PC-3 (cell line): ENCODE measurements at regions of chr2 and their contacts with region 1.

Region 1: GRCh38 chr2:61789807-61790602 is 63.9 kb downstream of the FAM161A start:
- DNase-seq: peak; percentile 64
- ATAC-seq: no peak
- H3K4me3 ChIP-seq: no peak overlapping the region
- H3K27ac ChIP-seq: no peak overlapping the region
- H3K4me1 ChIP-seq: peaks cover 7% of the 10 kb centered on the region
- H3K27me3 ChIP-seq: no peaks in the 10 kb centered on the region
- CTCF ChIP-seq: no peak

Region 2: DNA sequence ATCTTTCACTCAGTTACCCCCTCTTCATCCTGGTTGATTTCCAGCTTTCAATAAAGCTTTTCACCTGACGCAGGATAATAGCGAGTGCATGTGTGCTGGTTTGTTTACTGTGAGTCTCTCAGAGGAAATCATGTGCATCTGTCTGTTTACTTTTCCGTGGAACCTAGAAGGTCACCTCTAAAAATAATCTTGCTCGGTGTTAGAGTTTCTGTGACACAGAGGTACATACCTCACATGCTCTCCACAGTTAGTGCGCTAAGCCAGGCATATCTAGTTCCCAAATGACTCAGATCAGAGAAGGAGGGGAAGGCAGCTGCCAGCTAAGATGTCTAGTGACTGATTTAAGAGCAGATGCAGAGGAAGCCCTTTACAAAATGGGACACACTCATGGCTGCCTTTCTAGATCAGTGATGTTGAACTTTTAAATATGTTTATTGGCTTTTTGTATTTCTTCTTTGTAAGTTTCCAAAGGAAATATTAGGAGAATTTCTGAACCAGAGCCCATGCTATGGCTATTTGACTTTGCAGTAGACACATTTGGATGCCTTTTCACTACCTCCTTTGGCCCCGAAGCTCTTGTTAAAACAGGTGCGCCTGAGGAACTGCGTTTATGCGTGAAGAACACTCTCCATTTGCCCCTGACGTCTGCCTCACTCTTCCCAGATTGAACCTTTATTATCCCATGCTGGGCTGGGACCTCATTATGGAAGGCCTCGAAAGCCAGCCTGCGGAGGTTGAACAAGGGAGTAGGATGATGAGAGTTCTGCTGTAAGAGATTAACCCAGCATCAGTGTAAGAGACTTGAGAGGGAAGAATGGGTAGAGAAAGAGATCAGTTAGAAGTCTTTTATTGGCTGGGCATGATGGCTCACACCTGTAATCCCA is 81.8 kb before region 1 on chr2:
- CTCF ChIA-PET with region 1: no interaction called
- POLR2A ChIA-PET with region 1: no interaction called
- intact Hi-C with region 1: loop called (anchors 5 kb)
- DNase-seq: peak; percentile 80
- ATAC-seq: peak; percentile 100
- H3K4me3 ChIP-seq: peak overlapping the region; percentile 46
- H3K27ac ChIP-seq: no peak overlapping the region
- H3K4me1 ChIP-seq: peaks cover 5% of the 10 kb centered on the region; the same call in 1 of the 2 replicates
- H3K27me3 ChIP-seq: no peaks in the 10 kb centered on the region
- CTCF ChIP-seq: no peak

Region 3: GRCh38 chr2:61943251-61943650 is 153.2 kb after region 1 on chr2:
- CTCF ChIA-PET with region 1: no interaction called
- POLR2A ChIA-PET with region 1: no interaction called
- intact Hi-C with region 1: no loop called
- DNase-seq: peak; percentile 11
- ATAC-seq: no peak
- H3K4me3 ChIP-seq: no peak overlapping the region
- H3K27ac ChIP-seq: no peak overlapping the region
- H3K4me1 ChIP-seq: peaks cover 5% of the 10 kb centered on the region; the same call in 1 of the 2 replicates
- H3K27me3 ChIP-seq: no peaks in the 10 kb centered on the region
- CTCF ChIP-seq: no peak

Region 4: GRCh38 chr2:62071126-62071598 is 281.2 kb after region 1 on chr2:
- CTCF ChIA-PET with region 1: no interaction called
- POLR2A ChIA-PET with region 1: no interaction called
- intact Hi-C with region 1: no loop called
- DNase-seq: peak; percentile 34
- ATAC-seq: no peak
- H3K4me3 ChIP-seq: no peak overlapping the region
- H3K27ac ChIP-seq: no peak overlapping the region
- H3K4me1 ChIP-seq: no peaks in the 10 kb centered on the region
- H3K27me3 ChIP-seq: no peaks in the 10 kb centered on the region
- CTCF ChIP-seq: no peak